Activated CD4-positive, alpha-beta T cell treated with anti-CD3 and anti-CD28 coated beads, Interleukin-2, amount 10 ng/mL, durations not matched to agents 24 days and 14 days (primary cell): ENCODE measurements at regions of chr19 and their contacts with region 1.

Region 1: GRCh38 chr19:56314562-56315077 is at the start of gene ZSCAN5A:
- DNase-seq: peak; percentile 98
- H3K4me3 Mint-ChIP-seq: peak within 1 kb of the TSS; percentile 98
- H3K27ac Mint-ChIP-seq: peak within 1 kb of the TSS; percentile 99
- H3K4me1 Mint-ChIP-seq: peaks cover 33% of the 10 kb centered on the region
- H3K27me3 Mint-ChIP-seq: no peaks in the 10 kb centered on the region
- total RNA-seq, gene ZSCAN5A: 6.9 and 10.8 TPM in 2 replicates

Region 2: DNA sequence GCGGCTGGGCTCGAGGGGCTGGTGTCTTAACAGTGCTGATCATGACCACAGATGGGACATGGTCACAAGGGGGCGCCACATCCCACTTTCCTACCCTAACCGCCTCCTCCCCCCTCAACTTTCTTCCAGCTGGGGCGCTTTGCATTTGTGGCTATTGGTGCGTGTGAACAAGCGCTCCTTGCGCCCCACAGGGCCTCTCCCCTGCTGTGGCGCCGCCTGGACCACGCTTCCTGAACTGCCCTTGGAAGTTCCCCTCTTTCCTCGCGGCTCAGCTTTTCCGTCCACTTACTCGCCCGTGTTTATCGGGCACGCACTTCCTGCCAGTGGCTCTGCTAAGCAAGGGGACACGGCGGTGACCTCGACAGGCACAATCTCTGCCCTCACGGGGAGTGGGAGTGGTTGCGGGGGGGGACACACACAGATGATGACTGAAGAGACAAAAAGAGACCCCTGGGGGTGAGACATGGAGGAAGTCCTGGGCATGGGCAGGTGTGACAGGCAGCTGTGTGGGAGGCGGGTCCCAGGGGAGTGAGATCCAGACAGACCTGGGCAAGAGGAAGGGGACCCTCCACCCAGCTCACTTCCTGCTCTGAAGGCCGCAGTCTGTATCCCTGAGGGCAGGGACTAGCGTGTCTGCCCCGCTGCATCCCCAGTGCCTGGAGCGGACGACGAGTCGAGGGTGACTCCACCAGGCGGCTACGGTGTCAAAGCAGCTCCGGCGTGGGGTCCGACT is 233.8 kb before region 1 on chr19:
- intact Hi-C with region 1: loop called (anchors 5 kb)
- DNase-seq: peak; percentile 88
- H3K4me3 Mint-ChIP-seq: peak overlapping the region; percentile 79
- H3K27ac Mint-ChIP-seq: peak overlapping the region; percentile 58
- H3K4me1 Mint-ChIP-seq: peaks cover 10% of the 10 kb centered on the region
- H3K27me3 Mint-ChIP-seq: peaks cover 4% of the 10 kb centered on the region

Region 3: DNA sequence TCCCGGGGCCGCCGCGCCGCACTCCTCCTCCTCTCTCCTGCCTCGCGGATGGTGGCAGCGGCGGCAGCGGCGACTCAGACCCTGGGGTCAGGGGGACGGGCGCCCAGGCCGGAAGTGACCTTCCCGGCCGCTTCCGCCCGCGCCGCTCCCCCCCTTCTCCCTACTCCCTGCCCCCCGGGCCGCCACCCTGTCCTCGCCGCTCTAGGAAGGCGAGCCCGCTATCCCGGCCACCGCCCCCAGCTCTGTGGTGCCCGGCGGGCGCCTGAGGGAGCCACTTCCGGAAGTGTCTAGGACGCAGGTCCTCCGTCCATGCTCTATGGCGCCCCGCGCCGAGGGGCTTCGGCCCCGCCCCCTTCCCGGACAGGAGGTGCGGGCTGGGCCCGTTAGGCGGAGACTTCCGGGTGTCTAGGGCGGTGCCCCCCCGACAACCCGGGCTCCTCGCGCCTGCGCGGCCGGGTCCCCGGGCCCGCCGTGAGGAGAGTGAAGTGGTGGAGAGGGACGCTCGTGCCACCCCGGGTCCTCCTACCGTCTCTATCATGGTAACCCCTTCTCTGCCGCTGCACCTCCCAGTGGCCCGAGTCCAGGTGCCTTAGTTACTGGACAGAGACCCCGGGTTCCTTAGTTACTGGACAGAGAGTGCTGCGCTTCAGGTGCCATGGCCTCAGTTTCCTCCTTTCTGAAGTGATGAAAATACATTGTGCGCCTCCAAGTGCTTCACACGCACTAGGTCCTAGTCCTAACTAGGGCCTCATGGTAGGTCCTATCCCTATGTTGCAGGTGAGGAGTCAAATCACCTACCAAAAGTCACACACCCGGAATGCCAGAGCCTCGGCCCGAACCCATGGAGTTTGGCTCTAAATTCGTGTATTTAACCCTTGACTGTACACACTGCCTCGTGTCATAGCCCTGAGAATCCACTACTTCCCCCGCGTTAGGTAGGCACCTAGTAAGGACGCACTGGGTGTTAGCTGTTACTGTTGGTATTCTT is 193.1 kb before region 1 on chr19 and contains the start of gene ZNF787:
- intact Hi-C with region 1: loop called (anchors 1 kb)
- DNase-seq: peak; percentile 99
- H3K4me3 Mint-ChIP-seq: peak within 1 kb of the TSS; percentile 90
- H3K27ac Mint-ChIP-seq: peak within 1 kb of the TSS; percentile 97
- H3K4me1 Mint-ChIP-seq: peaks cover 35% of the 10 kb centered on the region
- H3K27me3 Mint-ChIP-seq: peaks cover 2% of the 10 kb centered on the region
- total RNA-seq, gene ZNF787: 36.4 and 37.0 TPM in 2 replicates

Region 4: GRCh38 chr19:56140583-56141416 is 173.8 kb before region 1 on chr19 and contains the start of gene ZNF444:
- intact Hi-C with region 1: loop called (anchors 1 kb)
- DNase-seq: peak; percentile 100
- H3K4me3 Mint-ChIP-seq: peak within 1 kb of the TSS; percentile 94
- H3K27ac Mint-ChIP-seq: peak within 1 kb of the TSS; percentile 91
- H3K4me1 Mint-ChIP-seq: peaks cover 36% of the 10 kb centered on the region
- H3K27me3 Mint-ChIP-seq: peaks cover 4% of the 10 kb centered on the region
- total RNA-seq, gene ZNF444: 35.5 and 35.7 TPM in 2 replicates

Region 5: GRCh38 chr19:56290104-56290503 is 24.5 kb before region 1 on chr19:
- intact Hi-C with region 1: loop called (anchors 1 kb)
- DNase-seq: no peak
- H3K4me3 Mint-ChIP-seq: no peak overlapping the region
- H3K27ac Mint-ChIP-seq: no peak overlapping the region
- H3K4me1 Mint-ChIP-seq: no peaks in the 10 kb centered on the region
- H3K27me3 Mint-ChIP-seq: no peaks in the 10 kb centered on the region